Mammary epithelial cell (primary cell): ENCODE measurements at regions of chr1 and their contacts with region 1.

Region 1: DNA sequence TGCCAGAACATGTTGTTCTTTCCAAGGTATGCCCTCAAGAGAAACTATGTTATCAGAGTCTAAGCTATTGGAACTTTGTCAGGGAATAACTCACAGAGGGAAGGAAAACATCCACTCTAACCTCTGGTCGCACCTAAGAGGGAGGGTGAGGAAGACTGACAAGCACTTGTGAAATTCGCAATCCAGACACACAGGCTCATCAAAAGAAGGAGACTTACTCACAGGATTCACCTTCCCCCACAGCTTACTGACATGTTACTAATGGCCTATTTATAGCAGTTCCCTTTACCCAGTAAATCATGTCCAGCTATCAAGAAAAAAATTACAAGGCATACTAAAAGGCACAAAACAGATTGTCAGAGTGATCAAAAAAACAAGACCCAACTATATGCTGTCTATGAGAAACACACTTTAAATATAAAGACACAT is 36.9 kb downstream of the WDR64 start:
- DNase-seq: peak; percentile 98
- H3K4me3 ChIP-seq: no peak overlapping the region
- H3K27ac ChIP-seq: peak overlapping the region; percentile 91
- H3K4me1 ChIP-seq: peaks cover 17% of the 10 kb centered on the region
- H3K27me3 ChIP-seq: no peaks in the 10 kb centered on the region
- CTCF ChIP-seq: no peak

Region 2: DNA sequence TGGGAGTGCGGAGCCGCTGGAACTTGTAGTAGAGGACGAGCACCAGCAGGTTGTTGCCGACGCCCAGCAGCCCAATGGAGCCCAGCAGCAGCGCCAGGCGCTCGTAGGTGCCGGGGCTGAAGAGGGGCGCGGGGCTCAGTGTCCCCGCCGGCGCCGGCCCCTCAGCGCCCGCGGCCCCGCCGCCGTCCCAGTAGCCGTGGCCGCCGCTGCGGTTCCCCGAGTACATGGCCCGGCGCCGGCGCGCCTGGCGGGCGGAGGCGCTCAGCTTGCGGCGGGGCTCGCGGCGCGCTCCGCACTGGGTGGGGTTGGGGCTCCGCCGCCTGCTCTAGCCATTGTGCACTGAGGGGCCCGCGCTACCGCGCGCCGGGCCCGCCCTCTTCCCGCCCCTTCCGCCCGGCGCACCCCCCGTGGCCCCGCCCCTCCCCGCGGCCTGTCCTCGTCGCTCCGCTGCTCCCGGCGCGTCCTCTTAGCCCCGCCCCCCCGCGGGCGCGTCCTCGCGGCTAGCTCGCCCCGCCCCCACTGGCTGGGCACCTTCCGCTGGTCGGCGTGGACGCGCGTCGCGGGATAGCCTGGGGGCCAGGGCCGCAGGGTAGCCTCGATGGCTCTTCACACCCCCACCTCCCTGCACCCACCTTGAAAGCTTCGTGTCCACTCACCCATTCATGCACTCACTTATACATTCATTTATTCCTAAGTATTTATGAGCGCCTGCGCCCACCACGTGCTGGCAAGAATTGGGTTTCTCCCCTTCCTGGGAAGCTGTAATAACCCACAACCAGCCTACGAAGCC is 48.7 kb before region 1 on chr1 and contains the starts of genes CHML and OPN3:
- CTCF ChIA-PET with region 1: no interaction called
- dilution Hi-C with region 1: no loop called
- in situ Hi-C with region 1: no loop called
- intact Hi-C with region 1: loop called (anchors 1 kb)
- DNase-seq: peak; percentile 83
- H3K4me3 ChIP-seq: peak within 1 kb of the TSS; percentile 91 to 99 (median 99)
- H3K27ac ChIP-seq: peak within 1 kb of the TSS; percentile 76
- H3K4me1 ChIP-seq: peaks cover 22% of the 10 kb centered on the region
- H3K27me3 ChIP-seq: no peaks in the 10 kb centered on the region
- CTCF ChIP-seq: peak in 1 of 2 donors; percentile 17
- total RNA-seq, gene CHML: 15.0 to 25.3 TPM
- total RNA-seq, gene OPN3: 21.3 to 36.5 TPM

Region 3: DNA sequence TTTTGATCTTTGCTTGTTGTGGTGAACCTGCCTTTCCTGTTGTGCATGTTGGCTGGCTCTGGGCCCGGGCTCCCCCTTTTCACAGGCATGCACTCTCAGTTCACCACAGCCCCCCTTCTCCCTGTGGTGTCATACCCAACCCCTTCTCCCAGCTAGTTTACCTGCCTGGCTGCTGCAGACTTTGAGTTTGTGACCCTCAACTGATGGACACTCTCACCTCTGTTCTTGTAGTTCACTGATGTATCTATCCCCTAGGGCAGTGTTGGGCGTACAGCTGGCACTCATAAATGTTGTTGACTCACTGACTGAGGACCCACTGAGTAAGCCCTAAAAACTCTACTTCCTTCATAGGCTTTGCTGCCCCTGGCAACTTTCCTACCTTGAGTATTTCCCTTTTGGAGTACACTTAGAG is 18.0 kb after region 1 on chr1:
- CTCF ChIA-PET with region 1: no interaction called
- dilution Hi-C with region 1: no loop called
- in situ Hi-C with region 1: no loop called
- intact Hi-C with region 1: loop called (anchors 2 kb)
- DNase-seq: peak; percentile 92
- H3K4me3 ChIP-seq: no peak overlapping the region
- H3K27ac ChIP-seq: peak overlapping the region; percentile 25
- H3K4me1 ChIP-seq: peaks cover 47% of the 10 kb centered on the region
- H3K27me3 ChIP-seq: no peaks in the 10 kb centered on the region
- CTCF ChIP-seq: no peak

Region 4: DNA sequence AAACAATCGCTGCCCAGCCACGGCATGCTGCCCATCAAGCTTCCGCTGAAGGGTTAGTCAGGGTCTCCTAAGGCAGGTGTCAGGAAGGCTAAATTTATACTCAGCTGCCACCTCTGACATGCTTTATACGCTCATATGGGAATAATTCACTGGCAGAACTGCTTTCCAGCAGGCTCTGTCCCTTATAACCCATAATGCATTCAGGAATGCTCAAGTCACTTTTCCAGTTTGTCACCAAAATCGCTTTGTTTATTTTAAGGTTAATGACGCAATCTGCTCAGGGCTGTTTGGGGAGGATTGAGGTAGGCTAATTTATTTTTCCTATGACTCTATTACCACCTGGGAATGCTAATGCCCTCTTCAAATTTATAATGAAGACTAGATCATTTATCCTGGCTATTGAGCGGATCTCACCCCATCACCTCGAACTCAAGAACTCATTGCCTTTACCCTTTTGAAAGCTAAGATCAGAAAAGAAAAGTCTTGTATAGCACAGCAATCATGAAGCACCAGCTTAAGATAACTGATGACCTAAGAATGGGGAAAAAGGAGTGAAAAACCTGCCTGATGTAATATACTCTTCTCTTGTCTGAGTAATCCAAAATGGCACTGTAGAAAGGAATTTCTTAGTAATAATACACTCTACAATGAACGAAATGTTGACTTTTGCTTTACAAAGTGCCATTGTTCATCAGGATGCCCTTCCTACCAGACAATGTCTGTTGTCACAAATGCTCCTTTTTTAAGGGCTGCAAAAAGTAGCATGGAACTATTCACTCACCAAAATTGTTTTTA is 61.1 kb after region 1 on chr1:
- CTCF ChIA-PET with region 1: no interaction called
- dilution Hi-C with region 1: no loop called
- in situ Hi-C with region 1: no loop called
- intact Hi-C with region 1: loop called (anchors 2 kb)
- DNase-seq: no peak
- H3K4me3 ChIP-seq: no peak overlapping the region
- H3K27ac ChIP-seq: no peak overlapping the region
- H3K4me1 ChIP-seq: no peaks in the 10 kb centered on the region
- H3K27me3 ChIP-seq: no peaks in the 10 kb centered on the region
- CTCF ChIP-seq: no peak

Region 5: DNA sequence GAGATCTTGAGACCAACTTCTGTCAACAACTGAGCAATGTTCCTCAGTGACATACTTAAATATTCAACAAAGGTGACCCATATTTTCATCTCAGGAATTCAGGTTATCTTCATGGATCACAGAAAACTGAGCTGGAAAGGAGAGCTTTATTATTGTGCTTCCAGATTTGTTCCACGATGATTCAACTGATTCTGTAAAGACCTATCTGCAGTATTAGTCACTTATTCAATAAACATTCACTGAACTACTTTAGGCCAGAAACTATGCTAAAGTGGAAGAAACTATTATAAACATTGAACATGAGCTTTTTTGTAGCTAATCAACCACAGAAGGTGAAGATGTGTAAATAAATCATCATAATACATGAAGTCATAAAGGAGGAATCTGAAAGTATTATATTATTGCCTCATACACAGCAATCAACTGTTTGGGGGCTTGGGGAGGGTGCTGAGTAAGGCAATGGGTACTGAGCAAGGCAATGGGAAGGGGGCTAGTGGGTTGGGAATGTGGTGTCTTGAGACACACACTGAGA is 128.4 kb after region 1 on chr1:
- CTCF ChIA-PET with region 1: no interaction called
- dilution Hi-C with region 1: no loop called
- in situ Hi-C with region 1: no loop called
- intact Hi-C with region 1: no loop called
- DNase-seq: peak; percentile 39
- H3K4me3 ChIP-seq: no peak overlapping the region
- H3K27ac ChIP-seq: no peak overlapping the region
- H3K4me1 ChIP-seq: no peaks in the 10 kb centered on the region
- H3K27me3 ChIP-seq: no peaks in the 10 kb centered on the region
- CTCF ChIP-seq: no peak

Region 6: DNA sequence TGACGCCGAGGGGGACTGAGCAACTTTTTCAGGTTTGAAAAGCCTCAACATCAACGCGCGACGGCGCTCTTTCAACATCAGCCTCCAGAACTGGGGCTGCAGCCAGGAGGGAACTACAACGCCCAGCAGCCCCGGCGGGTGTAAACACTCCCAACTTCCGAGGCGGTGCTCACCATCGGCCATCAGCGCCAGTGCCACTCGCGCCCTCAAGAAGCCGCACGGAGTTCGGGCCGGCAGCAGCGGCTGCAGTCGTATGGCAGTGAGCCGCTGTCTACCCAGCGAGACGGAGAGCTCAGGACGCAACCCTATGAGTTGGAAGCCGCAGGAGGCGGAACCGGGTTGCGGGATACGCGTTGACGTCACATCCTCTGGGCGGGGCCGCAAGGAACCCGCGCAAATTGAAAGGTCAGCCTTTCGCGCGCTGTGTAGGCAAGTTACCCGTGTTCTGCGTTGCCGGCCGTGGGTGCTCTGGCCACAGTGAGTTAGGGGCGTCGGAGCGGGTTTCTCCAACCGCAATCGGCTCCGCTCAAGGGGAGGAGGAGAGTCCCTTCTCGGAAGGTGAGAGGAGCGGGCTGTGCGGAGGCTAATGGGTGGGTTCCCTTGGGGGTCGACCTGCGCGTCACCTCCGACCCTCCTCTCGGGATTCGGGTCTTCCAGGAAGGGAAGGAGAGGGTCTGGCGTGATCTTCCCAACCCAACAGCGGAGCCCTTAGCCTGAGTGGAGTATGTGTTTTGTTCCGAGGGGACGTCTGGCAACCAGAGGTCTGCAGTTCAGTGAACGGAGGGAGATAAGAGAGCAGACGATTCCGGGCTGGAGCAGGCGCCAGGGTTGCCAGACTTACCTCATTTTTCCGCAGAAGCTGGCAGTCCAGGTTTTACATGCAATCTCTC is 159.1 kb after region 1 on chr1 and contains the start of gene EXO1:
- CTCF ChIA-PET with region 1: no interaction called
- dilution Hi-C with region 1: no loop called
- in situ Hi-C with region 1: no loop called
- intact Hi-C with region 1: loop called (anchors 5 kb)
- DNase-seq: peak; percentile 93
- H3K4me3 ChIP-seq: peak within 1 kb of the TSS; percentile 83 to 96 (median 92)
- H3K27ac ChIP-seq: peak within 1 kb of the TSS; percentile 83
- H3K4me1 ChIP-seq: peaks cover 14% of the 10 kb centered on the region
- H3K27me3 ChIP-seq: no peaks in the 10 kb centered on the region
- CTCF ChIP-seq: peak in 1 of 2 donors; percentile 43
- total RNA-seq, gene EXO1: 3.3 to 21.4 TPM